ENCODE measurements at regions of chr17 and their contacts with region 1.

Region 1: DNA sequence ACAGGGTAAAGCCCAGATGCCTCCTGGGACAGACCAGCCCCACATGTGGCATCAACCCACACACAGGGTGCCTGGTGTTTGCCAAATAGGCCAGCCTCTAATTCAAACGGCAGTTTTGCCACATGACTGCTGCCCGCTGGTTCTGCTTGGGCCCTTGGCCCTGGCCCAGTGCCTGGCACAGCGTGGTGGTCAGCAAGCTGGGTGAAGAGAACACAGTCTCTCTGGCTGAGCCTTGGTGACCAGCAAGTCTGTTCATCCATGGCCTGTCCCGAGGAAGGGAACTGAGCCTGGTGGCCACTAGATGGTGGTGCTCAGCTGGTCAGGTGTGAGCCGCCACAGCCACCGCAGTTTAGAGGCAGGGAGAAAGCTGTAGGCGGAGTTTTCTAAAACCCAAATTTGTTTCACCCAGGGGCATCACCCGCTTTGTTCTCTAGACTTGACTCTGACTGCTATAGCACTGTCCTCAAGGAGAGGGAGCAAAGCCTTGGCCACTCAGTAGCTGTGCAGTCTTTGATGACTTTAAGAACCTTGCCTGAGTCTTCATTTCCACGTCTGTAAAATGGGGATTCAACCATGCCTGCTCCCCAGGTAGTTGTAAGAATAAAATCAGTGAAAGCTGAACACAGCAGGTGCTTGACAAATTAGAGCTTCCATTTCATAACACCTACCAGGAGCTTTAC is 4.7 kb upstream of the GFAP start:
- DNase-seq: peak; percentile 90

Region 2: GRCh38 chr17:44979426-44979995 is 59.5 kb after region 1 on chr17:
- intact Hi-C with region 1: loop called (anchors 2 kb)
- DNase-seq: no peak

Region 3: DNA sequence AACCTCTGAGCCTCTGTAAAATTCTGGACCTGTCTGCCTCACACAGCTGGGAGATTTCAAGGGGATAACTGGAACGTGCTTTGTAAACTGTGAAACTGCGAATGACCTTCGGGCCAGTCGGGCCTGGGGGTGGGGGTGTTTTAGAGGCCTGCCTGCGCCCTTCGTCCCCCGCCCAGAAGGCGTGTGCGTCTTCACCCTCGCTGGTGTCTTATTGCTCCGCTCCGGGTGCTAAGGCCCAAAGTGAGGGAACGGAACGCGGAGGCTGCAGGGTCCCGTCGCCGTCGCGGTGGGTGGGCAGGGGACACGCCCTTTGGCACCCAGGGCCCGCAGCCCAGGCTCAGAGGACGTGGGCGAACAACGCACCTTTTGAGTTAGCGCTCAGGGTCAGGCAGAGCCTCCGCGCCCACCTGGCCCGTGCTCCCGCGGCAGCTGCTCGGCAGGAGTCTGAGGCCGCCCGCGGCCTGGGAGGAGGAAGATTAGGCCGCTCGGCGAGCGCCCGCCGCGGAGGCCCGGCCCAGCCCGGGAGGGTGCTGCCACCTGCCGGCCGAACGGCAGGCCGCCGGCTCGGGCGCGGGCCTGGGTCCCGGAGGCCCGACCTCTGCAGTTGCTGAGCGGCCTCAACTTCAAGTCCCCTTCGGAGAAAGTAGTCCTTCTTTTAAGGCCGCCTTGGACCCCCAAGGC is 101.7 kb after region 1 on chr17:
- intact Hi-C with region 1: loop called (anchors 1 kb)
- DNase-seq: peak; percentile 84

Region 4: GRCh38 chr17:45077643-45078042 is 157.6 kb after region 1 on chr17:
- intact Hi-C with region 1: no loop called
- DNase-seq: no peak

Region 5: GRCh38 chr17:45098869-45099616 is 179.0 kb after region 1 on chr17:
- intact Hi-C with region 1: loop called (anchors 5 kb)
- DNase-seq: peak; percentile 94

Region 6: GRCh38 chr17:45197555-45198334 is 277.7 kb after region 1 on chr17:
- intact Hi-C with region 1: loop called (anchors 10 kb)
- DNase-seq: peak; percentile 95